CD4-positive, alpha-beta T cell (primary cell): ENCODE measurements at regions of chr15 and their contacts with region 1.

Region 1: GRCh38 chr15:52667597-52667996 is 11.6 kb downstream of the ATOSA start:
- DNase-seq: no peak
- ATAC-seq: no peak
- H3K4me3 ChIP-seq: no peak overlapping the region
- H3K4me3 Mint-ChIP-seq: no peak overlapping the region
- H3K27ac ChIP-seq: no peak overlapping the region
- H3K27ac Mint-ChIP-seq: no peak overlapping the region
- H3K4me1 ChIP-seq: no peaks in the 10 kb centered on the region
- H3K4me1 Mint-ChIP-seq: peaks cover 37% of the 10 kb centered on the region
- H3K27me3 ChIP-seq: no peaks in the 10 kb centered on the region
- H3K27me3 Mint-ChIP-seq: no peaks in the 10 kb centered on the region
- CTCF ChIP-seq: no peak

Region 2: DNA sequence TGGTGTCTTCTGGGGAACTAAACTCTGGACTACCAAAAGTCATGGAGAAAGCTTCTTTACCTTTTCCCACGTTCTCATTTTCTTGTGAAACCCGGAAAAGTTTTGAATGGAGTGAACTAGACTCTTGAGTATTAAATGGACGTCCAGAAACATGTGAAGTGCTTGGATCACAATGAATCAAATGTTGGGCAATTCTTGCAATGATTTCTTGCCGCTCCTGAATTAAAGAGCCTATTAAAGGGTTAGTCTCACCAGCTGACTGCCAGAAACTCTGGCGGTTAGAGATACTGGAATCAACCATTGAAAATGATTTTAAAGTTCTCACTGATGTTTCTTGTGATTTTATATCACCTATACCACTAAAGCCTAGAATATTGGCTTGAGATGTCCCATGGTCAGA is 58.0 kb before region 1 on chr15:
- CTCF ChIA-PET with region 1: no interaction called
- POLR2A ChIA-PET with region 1: no interaction called
- intact Hi-C with region 1: no loop called
- DNase-seq: no peak
- ATAC-seq: no peak
- H3K4me3 ChIP-seq: no peak overlapping the region
- H3K4me3 Mint-ChIP-seq: no peak overlapping the region
- H3K27ac ChIP-seq: no peak overlapping the region
- H3K27ac Mint-ChIP-seq: no peak overlapping the region
- H3K4me1 ChIP-seq: no peaks in the 10 kb centered on the region
- H3K4me1 Mint-ChIP-seq: no peaks in the 10 kb centered on the region
- H3K27me3 ChIP-seq: no peaks in the 10 kb centered on the region
- H3K27me3 Mint-ChIP-seq: no peaks in the 10 kb centered on the region
- CTCF ChIP-seq: no peak

Region 3: GRCh38 chr15:52651868-52652267 is 15.7 kb before region 1 on chr15:
- CTCF ChIA-PET with region 1: no interaction called
- POLR2A ChIA-PET with region 1: no interaction called
- intact Hi-C with region 1: loop called in 1 of 2 experiments (anchors 2 kb)
- DNase-seq: peak in 13 of 14 experiments; percentile 4 to 71 (median 22)
- ATAC-seq: peak; percentile 97
- H3K4me3 ChIP-seq: no peak overlapping the region
- H3K4me3 Mint-ChIP-seq: peak overlapping the region; percentile 52
- H3K27ac ChIP-seq: no peak overlapping the region
- H3K27ac Mint-ChIP-seq: peak overlapping the region; percentile 43
- H3K4me1 ChIP-seq: no peaks in the 10 kb centered on the region
- H3K4me1 Mint-ChIP-seq: peaks cover 22% of the 10 kb centered on the region
- H3K27me3 ChIP-seq: no peaks in the 10 kb centered on the region
- H3K27me3 Mint-ChIP-seq: no peaks in the 10 kb centered on the region
- CTCF ChIP-seq: no peak

Region 4: DNA sequence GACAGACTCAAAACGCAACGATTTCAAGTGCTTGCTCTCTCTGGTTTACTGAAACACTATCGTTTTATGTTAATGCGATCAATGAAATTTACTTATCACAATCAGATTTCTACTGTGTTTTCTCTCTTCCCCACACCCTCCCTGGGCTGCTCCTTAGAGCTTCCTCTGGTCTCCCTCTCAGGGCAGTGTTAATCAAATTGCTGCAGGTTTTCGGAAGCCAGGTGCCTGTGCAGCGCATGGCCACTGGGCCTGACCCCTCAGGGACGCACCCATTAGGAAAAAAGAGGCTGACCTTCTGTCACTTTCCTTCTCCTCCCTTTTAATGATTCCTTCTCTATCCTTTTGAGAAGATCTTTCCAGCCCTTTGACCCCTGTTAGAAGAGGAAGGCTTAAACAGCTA is 257.0 kb after region 1 on chr15:
- CTCF ChIA-PET with region 1: no interaction called
- POLR2A ChIA-PET with region 1: no interaction called
- intact Hi-C with region 1: no loop called
- DNase-seq: no peak
- ATAC-seq: no peak
- H3K4me3 ChIP-seq: no peak overlapping the region
- H3K4me3 Mint-ChIP-seq: no peak overlapping the region
- H3K27ac ChIP-seq: no peak overlapping the region
- H3K27ac Mint-ChIP-seq: no peak overlapping the region
- H3K4me1 ChIP-seq: no peaks in the 10 kb centered on the region
- H3K4me1 Mint-ChIP-seq: no peaks in the 10 kb centered on the region
- H3K27me3 ChIP-seq: no peaks in the 10 kb centered on the region
- H3K27me3 Mint-ChIP-seq: peaks cover 39% of the 10 kb centered on the region
- CTCF ChIP-seq: no peak